Activated CD4-positive, alpha-beta memory T cell treated with anti-CD3 and anti-CD28 coated beads, Interleukin-2, amount 10 ng/mL, durations not matched to agents 7 days and 5 days (primary cell): ENCODE measurements at regions of chr3 and their contacts with region 1.

Region 1: DNA sequence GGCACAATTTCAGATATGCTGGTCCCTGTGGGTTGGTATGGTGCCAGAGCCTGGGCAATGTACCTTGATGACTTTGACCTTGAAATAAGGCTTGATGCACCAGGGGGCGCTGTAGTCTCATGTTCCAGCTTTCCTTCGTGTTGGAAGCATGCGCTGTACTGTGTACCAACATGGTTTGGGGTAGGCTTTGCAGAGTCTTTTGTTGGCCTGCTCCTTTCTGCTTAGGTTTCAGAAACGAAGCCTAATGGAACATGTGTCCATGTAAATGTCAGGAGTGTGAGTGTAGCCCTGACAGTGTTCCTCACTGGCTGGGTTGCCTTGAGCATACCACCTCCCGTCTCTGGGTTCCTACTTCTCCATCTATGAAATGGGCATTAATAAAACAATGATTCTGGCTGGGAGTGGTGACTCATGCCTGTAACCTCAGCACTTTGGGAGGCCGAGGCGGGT is 3.6 kb upstream of the CCR4 start:
- DNase-seq: peak; percentile 94
- H3K4me3 Mint-ChIP-seq: no peak overlapping the region
- H3K27ac Mint-ChIP-seq: peak overlapping the region; percentile 21
- H3K4me1 Mint-ChIP-seq: peaks cover 49% of the 10 kb centered on the region
- H3K27me3 Mint-ChIP-seq: no peaks in the 10 kb centered on the region

Region 2: GRCh38 chr3:32934150-32934742 is 13.6 kb before region 1 on chr3:
- CTCF ChIA-PET with region 1: no interaction called
- POLR2A ChIA-PET with region 1: no interaction called
- DNase-seq: no peak
- H3K4me3 Mint-ChIP-seq: no peak overlapping the region
- H3K27ac Mint-ChIP-seq: no peak overlapping the region
- H3K4me1 Mint-ChIP-seq: no peaks in the 10 kb centered on the region
- H3K27me3 Mint-ChIP-seq: peaks cover 5% of the 10 kb centered on the region

Region 3: GRCh38 chr3:32960404-32961170 is 12.8 kb after region 1 on chr3:
- CTCF ChIA-PET with region 1: interaction called, 7 read pairs
- POLR2A ChIA-PET with region 1: interaction called, 10 read pairs
- DNase-seq: no peak
- H3K4me3 Mint-ChIP-seq: peak overlapping the region; percentile 27
- H3K27ac Mint-ChIP-seq: peak overlapping the region; percentile 77
- H3K4me1 Mint-ChIP-seq: peaks cover 66% of the 10 kb centered on the region
- H3K27me3 Mint-ChIP-seq: no peaks in the 10 kb centered on the region

Region 4: GRCh38 chr3:32992322-32992692 is 44.5 kb after region 1 on chr3:
- CTCF ChIA-PET with region 1: interaction called, 7 read pairs
- POLR2A ChIA-PET with region 1: interaction called, 18 read pairs
- DNase-seq: no peak
- H3K4me3 Mint-ChIP-seq: peak overlapping the region; percentile 23
- H3K27ac Mint-ChIP-seq: peak overlapping the region; percentile 92
- H3K4me1 Mint-ChIP-seq: peaks cover 89% of the 10 kb centered on the region
- H3K27me3 Mint-ChIP-seq: no peaks in the 10 kb centered on the region

Region 5: GRCh38 chr3:33030802-33031201 is 83.0 kb after region 1 on chr3:
- CTCF ChIA-PET with region 1: interaction called, 83 read pairs
- POLR2A ChIA-PET with region 1: interaction called, 7 read pairs
- DNase-seq: peak; percentile 72
- H3K4me3 Mint-ChIP-seq: no peak overlapping the region
- H3K27ac Mint-ChIP-seq: peak overlapping the region; percentile 41
- H3K4me1 Mint-ChIP-seq: peaks cover 31% of the 10 kb centered on the region
- H3K27me3 Mint-ChIP-seq: no peaks in the 10 kb centered on the region

Region 6: GRCh38 chr3:33063651-33064051 is 115.8 kb after region 1 on chr3:
- CTCF ChIA-PET with region 1: interaction called, 180 read pairs
- POLR2A ChIA-PET with region 1: interaction called, 14 read pairs
- DNase-seq: peak; percentile 79
- H3K4me3 Mint-ChIP-seq: peak overlapping the region; percentile 8
- H3K27ac Mint-ChIP-seq: peak overlapping the region; percentile 93
- H3K4me1 Mint-ChIP-seq: peaks cover 83% of the 10 kb centered on the region
- H3K27me3 Mint-ChIP-seq: no peaks in the 10 kb centered on the region

Region 7: GRCh38 chr3:33131331-33132018 is 183.7 kb after region 1 on chr3:
- CTCF ChIA-PET with region 1: interaction called, 15 read pairs
- POLR2A ChIA-PET with region 1: interaction called, 4 read pairs
- DNase-seq: peak; percentile 40
- H3K4me3 Mint-ChIP-seq: no peak overlapping the region
- H3K27ac Mint-ChIP-seq: no peak overlapping the region
- H3K4me1 Mint-ChIP-seq: peaks cover 4% of the 10 kb centered on the region
- H3K27me3 Mint-ChIP-seq: no peaks in the 10 kb centered on the region